ENCODE measurements at regions of chr20 and their contacts with region 1.

Region 1: DNA sequence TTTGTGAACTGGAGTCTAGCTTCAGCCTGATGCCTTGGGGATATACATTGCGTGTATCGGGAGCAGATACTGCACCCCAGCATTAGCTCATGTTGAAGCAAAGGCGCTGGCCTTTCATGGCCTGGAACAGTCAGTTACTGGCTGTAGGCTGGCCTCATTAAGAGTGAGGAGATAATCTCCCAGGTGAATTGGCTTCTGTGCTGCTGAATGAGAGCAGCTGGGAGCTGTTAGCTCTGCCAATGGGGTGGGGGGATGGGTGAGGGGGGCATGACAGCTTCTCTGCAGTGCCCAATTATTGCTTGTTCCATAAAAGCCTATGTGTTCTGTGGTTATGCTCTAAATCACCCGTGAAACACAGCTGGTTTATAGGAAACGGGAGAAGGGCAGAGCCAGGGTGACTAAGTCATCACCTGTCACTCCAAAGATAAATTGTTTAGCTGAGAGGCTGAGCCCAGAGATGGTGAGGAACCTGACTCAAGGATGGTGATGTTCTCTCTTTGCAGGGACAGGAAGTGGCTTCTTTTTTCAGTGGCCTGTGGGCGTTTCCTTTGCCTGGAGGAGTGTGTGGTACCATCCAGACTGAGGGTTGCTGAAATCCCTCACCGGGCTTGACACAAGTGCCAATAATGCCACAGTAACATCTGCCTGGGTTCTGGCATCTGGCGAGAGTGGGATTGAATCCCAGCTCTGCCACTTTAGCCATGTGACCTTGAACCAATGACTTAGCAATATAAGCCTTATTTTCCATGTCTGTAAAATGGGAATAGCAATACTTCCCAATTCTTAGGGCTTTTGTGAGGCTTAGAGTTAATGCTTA is 170.8 kb downstream of the BCAS1 start:
- DNase-seq: peak; percentile 94
- ATAC-seq: peak; percentile 89
- H3K4me3 Mint-ChIP-seq: no peak overlapping the region
- H3K27ac Mint-ChIP-seq: peak overlapping the region; percentile 94
- H3K4me1 Mint-ChIP-seq: peaks cover 74% of the 10 kb centered on the region
- H3K27me3 Mint-ChIP-seq: no peaks in the 10 kb centered on the region
- CTCF ChIP-seq: no peak

Region 2: DNA sequence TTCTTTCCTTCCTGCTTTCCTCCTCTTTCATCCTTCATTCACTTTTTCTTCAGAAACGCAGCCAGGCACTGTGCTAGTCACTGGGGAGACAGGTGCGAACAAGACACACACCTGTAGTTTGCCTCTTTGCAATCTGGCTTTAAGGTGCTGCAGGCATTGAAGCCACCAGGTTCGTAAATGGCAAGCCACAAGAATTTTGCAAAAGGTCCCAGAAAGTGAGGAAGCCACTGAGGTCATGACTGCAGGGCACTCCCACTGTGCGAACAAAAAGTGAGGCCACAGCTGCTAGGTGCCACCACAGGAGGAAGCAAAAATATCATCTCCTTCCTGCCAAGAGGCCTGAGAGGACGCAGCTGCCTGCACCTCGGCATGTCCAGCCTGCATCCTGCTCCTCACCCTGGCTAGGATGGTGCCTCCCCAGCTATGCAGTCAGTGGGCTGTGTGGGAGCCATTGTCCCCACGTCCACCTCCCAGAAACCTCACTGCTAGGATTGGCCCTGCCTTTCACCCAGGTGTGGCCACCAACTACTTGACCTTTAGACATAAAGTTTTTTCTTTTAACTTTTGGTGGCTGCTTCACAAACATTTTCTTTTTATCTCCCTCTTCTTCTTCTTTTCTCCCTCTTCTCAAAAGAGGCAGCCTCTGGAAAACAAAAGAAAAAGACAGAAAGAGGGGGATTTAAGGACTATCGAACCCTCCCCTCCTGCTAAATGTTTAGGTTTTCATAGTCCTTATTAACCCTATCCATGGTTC is 60.0 kb before region 1 on chr20:
- CTCF ChIA-PET with region 1: interaction called, 5 read pairs
- POLR2A ChIA-PET with region 1: no interaction called
- intact Hi-C with region 1: loop called (anchors 10 kb)
- DNase-seq: peak; percentile 85
- ATAC-seq: peak; percentile 38
- H3K4me3 Mint-ChIP-seq: peak overlapping the region; percentile 33
- H3K27ac Mint-ChIP-seq: peak overlapping the region; percentile 92
- H3K4me1 Mint-ChIP-seq: peaks cover 73% of the 10 kb centered on the region
- H3K27me3 Mint-ChIP-seq: no peaks in the 10 kb centered on the region
- CTCF ChIP-seq: no peak

Region 3: GRCh38 chr20:53883098-53883811 is 16.3 kb before region 1 on chr20:
- CTCF ChIA-PET with region 1: interaction called, 25 read pairs
- POLR2A ChIA-PET with region 1: interaction called, 27 read pairs
- intact Hi-C with region 1: no loop called
- DNase-seq: peak; percentile 66
- ATAC-seq: no peak
- H3K4me3 Mint-ChIP-seq: peak overlapping the region; percentile 71
- H3K27ac Mint-ChIP-seq: peak overlapping the region; percentile 76
- H3K4me1 Mint-ChIP-seq: peaks cover 77% of the 10 kb centered on the region
- H3K27me3 Mint-ChIP-seq: no peaks in the 10 kb centered on the region
- CTCF ChIP-seq: no peak

Region 4: GRCh38 chr20:54227241-54227640 is 327.7 kb after region 1 on chr20:
- CTCF ChIA-PET with region 1: no interaction called
- POLR2A ChIA-PET with region 1: no interaction called
- intact Hi-C with region 1: no loop called
- DNase-seq: no peak
- ATAC-seq: no peak
- H3K4me3 Mint-ChIP-seq: no peak overlapping the region
- H3K27ac Mint-ChIP-seq: no peak overlapping the region
- H3K4me1 Mint-ChIP-seq: peaks cover 5% of the 10 kb centered on the region
- H3K27me3 Mint-ChIP-seq: peaks cover 2% of the 10 kb centered on the region
- CTCF ChIP-seq: no peak

Measured in activated CD8-positive, alpha-beta T cell treated with anti-CD3 and anti-CD28 coated beads for 36 hours (primary cell).